GM12878 (cell line): ENCODE measurements at regions of chr11 and their contacts with region 1.

Region 1: DNA sequence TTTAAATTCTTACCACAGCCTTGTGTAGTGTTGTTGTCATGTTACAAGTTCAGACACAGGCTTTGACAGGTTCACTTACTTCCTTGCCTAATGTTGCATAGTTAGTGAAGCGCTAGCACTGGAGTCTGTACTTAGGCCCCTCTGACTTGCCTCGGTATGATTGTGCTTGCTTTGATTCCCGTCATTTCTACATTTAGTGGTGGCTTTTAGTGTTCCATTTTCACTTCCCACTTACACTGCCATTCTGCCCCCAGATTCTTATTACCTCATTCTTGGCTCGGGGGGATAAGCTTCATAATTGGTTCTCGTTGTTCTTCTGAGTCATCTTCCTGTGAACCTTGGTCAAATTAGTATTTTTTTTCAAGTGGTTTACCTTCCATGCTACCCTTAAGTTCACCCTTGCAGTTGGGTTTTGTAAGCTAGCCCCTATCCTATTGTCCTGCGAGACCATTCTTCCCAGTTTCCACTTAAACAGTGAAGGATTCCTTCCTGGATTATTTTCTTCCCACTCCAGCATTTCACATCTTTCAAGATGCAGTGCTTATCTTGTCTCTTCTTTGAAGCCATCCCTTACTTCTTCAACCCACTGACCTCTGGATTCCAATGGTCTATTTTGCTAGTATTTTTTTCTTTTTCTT is 68.7 kb downstream of the DDX10 start:
- DNase-seq: peak; percentile 93
- ATAC-seq: peak; percentile 96
- H3K4me3 ChIP-seq: no peak overlapping the region
- H3K27ac ChIP-seq: peak overlapping the region; percentile 79
- H3K4me1 ChIP-seq: peaks cover 22% of the 10 kb centered on the region
- H3K27me3 ChIP-seq: no peaks in the 10 kb centered on the region
- CTCF ChIP-seq: no peak
- EP300 ChIP-seq: peak; percentile 56 to 94; a peak in 3 of 4 replicates
- POLR2A ChIP-seq: peak; percentile 57
- RAD21 ChIP-seq: no peak

Region 2: DNA sequence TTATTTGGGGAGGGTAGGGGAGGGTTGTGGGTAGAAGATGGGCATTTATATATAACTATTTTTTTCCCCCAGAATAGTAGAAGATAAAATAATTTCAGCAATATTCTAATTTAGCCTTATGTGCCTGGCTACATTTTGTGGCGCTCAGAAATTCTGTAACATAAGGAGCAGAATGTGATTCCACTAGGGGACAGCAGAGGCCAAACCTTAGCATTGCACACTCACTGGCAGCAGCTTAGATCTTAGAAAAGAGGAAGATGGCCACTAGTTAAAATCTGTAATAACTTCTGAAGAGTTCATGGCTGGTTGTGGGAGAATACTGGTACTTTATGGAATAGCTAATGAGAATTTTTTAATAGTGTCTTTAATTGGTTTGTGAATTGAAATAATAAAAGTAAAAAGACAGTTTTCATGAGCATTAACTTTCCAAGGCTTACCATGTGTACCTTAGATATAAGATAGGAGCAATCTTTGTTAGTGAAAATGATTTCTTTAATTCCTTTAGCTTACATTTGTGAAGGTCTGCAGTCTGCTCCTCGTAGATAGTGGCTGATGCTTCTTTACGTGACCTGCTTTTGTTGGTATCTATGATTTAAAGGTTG is 35.6 kb before region 1 on chr11:
- CTCF ChIA-PET with region 1: interaction called, 173 read pairs
- POLR2A ChIA-PET with region 1: interaction called, 13 read pairs
- RAD21 ChIA-PET with region 1: interaction called, 161 read pairs
- SMC1A ChIA-PET with region 1: interaction called, 136 read pairs
- in situ Hi-C with region 1: no loop called
- intact Hi-C with region 1: loop called (anchors 1 kb)
- DNase-seq: peak; percentile 49
- ATAC-seq: peak; percentile 92
- H3K4me3 ChIP-seq: no peak overlapping the region
- H3K27ac ChIP-seq: no peak overlapping the region
- H3K4me1 ChIP-seq: 0 out of 2 replicates have a peak, but pooled peaks cover 3% of the 10 kb centered on the region
- H3K27me3 ChIP-seq: no peaks in the 10 kb centered on the region
- CTCF ChIP-seq: peak; percentile 89 to 98 (median 94)
- EP300 ChIP-seq: no peak
- POLR2A ChIP-seq: no peak
- RAD21 ChIP-seq: peak; percentile 100

Region 3: DNA sequence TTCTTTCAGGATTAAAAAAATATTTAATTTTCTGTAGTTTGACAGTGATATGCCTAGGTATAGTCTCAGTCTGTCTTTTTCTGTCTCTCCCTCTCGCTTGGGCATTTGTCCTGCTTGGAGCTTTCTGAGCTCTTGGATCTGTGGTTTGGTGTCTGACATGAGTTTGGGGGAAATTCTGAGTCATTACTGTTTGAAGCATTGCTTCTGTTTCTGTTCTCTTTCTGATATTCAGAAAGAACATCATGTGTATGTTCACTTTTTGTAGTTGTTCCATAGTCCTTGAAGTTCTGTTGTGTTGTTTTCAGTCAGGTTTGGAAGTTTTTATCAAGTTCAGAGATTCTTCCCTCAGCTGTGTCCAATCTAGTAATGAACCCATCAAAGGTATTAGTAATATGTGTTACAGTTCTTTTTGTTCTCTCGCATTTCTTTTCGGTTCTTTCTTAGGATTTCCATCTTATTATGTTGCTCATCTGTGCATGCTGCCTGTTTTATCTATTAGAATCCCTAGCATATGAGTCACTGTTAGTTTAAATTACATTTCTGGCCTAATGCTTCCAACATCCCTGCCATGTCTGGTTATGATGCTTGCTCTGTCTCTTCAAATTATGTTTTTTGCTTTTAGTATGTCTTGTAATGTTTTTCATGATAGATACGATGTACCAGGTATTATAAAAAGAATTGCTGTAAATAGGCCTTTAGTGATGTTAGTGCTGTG is 20.4 kb before region 1 on chr11:
- CTCF ChIA-PET with region 1: interaction called, 31 read pairs
- POLR2A ChIA-PET with region 1: interaction called, 3 read pairs
- RAD21 ChIA-PET with region 1: interaction called, 18 read pairs
- SMC1A ChIA-PET with region 1: interaction called, 51 read pairs
- in situ Hi-C with region 1: no loop called
- intact Hi-C with region 1: loop called (anchors 2 kb)
- DNase-seq: peak; percentile 54
- ATAC-seq: peak; percentile 80
- H3K4me3 ChIP-seq: peak overlapping the region; percentile 19; the same call in 1 of the 2 replicates
- H3K27ac ChIP-seq: peak overlapping the region; percentile 62
- H3K4me1 ChIP-seq: peaks cover 8% of the 10 kb centered on the region; the same call in 1 of the 2 replicates
- H3K27me3 ChIP-seq: no peaks in the 10 kb centered on the region
- CTCF ChIP-seq: no peak
- EP300 ChIP-seq: no peak; a peak in 1 of 4 replicates
- POLR2A ChIP-seq: no peak
- RAD21 ChIP-seq: 0 out of 2 replicates have a peak, but pooled peaks have one; percentile 2

Region 4: DNA sequence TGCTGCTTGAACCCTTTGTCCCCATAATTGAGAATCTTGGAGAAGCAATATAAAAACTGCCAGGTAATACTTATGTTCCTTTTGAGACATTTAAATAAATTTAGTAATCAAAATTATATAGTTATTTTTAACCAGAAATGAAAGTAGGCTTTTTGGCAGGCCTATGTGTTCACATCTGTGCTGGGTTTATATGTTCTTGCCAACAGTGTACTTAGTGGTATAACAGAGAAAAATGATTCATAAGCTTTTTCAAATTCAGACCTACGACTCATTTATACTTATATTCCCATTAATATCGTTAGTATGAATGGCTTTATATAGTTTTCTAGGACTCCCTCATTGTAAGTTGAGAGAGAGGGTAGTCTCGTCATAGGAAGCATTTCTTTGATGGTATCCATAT is 10.3 kb after region 1 on chr11:
- CTCF ChIA-PET with region 1: interaction called, 23 read pairs
- POLR2A ChIA-PET with region 1: interaction called, 3 read pairs
- RAD21 ChIA-PET with region 1: interaction called, 6 read pairs
- SMC1A ChIA-PET with region 1: interaction called, 16 read pairs
- in situ Hi-C with region 1: no loop called
- intact Hi-C with region 1: no loop called
- DNase-seq: no peak
- ATAC-seq: no peak
- H3K4me3 ChIP-seq: no peak overlapping the region
- H3K27ac ChIP-seq: no peak overlapping the region
- H3K4me1 ChIP-seq: no peaks in the 10 kb centered on the region
- H3K27me3 ChIP-seq: no peaks in the 10 kb centered on the region
- CTCF ChIP-seq: no peak
- EP300 ChIP-seq: no peak
- POLR2A ChIP-seq: no peak
- RAD21 ChIP-seq: no peak

Region 5: GRCh38 chr11:108754901-108755632 is 21.5 kb after region 1 on chr11:
- CTCF ChIA-PET with region 1: interaction called, 29 read pairs
- POLR2A ChIA-PET with region 1: interaction called, 3 read pairs
- RAD21 ChIA-PET with region 1: interaction called, 9 read pairs
- SMC1A ChIA-PET with region 1: interaction called, 16 read pairs
- in situ Hi-C with region 1: no loop called
- intact Hi-C with region 1: no loop called
- DNase-seq: no peak
- ATAC-seq: peak; percentile 19
- H3K4me3 ChIP-seq: no peak overlapping the region
- H3K27ac ChIP-seq: peak overlapping the region; percentile 18; the same call in 1 of the 2 replicates
- H3K4me1 ChIP-seq: peaks cover 6% of the 10 kb centered on the region
- H3K27me3 ChIP-seq: no peaks in the 10 kb centered on the region
- CTCF ChIP-seq: no peak
- EP300 ChIP-seq: no peak
- POLR2A ChIP-seq: no peak
- RAD21 ChIP-seq: no peak

Region 6: DNA sequence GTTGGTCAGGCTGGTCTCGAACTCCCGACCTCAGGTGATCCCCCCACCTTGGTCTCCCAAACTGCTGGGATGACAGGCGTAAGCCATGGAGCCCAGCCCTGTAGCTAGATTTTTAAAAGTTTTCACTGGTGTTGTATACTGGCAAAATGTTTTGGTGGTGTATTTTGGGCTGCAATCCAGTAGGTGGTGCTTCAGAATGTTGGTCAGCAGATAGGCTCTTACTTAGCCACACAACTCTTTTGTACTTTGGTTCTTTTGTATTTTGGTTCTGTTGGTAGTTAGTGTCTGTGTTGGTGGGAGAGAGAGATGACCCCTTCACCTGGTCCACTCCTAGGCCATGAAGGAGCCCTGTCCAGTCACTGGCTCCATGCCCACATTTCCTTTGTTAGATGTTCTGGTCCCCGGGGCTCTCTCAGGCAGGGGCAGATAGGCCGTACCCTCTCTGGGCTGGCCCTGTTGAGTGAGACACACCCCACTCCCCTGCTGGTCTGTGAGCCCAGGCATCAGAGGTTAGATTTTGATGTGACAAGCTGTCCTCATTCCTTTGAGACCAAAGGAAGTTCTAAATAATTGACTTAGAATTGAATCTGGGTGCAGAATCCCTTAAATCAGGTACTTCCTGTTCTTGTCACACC is 55.1 kb after region 1 on chr11:
- CTCF ChIA-PET with region 1: interaction called, 18 read pairs
- POLR2A ChIA-PET with region 1: no interaction called
- RAD21 ChIA-PET with region 1: interaction called, 3 read pairs
- SMC1A ChIA-PET with region 1: interaction called, 3 read pairs
- in situ Hi-C with region 1: no loop called
- intact Hi-C with region 1: no loop called
- DNase-seq: no peak
- ATAC-seq: peak; percentile 84
- H3K4me3 ChIP-seq: no peak overlapping the region
- H3K27ac ChIP-seq: no peak overlapping the region
- H3K4me1 ChIP-seq: peaks cover 4% of the 10 kb centered on the region; the same call in 1 of the 2 replicates
- H3K27me3 ChIP-seq: no peaks in the 10 kb centered on the region
- CTCF ChIP-seq: peak; percentile 50 to 55 (median 51); a peak in 5 of 6 replicates
- EP300 ChIP-seq: no peak
- POLR2A ChIP-seq: no peak
- RAD21 ChIP-seq: peak; percentile 69

Region 7: DNA sequence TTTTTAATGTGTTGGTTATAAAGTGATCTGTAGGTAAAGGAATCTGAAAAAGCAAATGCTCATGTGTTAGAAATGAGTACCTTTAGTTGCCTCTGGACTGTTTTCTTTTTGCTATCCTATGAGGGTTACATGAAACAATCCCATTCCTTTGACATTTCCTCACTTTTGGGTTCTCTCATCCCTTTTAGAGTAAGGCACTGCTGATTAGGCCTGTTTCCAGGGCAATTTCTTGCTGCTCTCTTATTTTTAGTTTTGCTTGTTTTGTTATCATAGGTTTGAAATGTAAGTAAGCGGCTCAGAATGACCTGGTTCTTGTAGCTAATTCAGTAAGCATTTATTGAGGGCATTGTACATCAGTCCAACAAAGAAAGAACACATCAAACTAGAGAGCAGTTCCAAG is 70.2 kb after region 1 on chr11:
- CTCF ChIA-PET with region 1: no interaction called
- POLR2A ChIA-PET with region 1: no interaction called
- RAD21 ChIA-PET with region 1: no interaction called
- SMC1A ChIA-PET with region 1: no interaction called
- in situ Hi-C with region 1: no loop called
- intact Hi-C with region 1: no loop called
- DNase-seq: no peak
- ATAC-seq: no peak
- H3K4me3 ChIP-seq: no peak overlapping the region
- H3K27ac ChIP-seq: no peak overlapping the region
- H3K4me1 ChIP-seq: no peaks in the 10 kb centered on the region
- H3K27me3 ChIP-seq: no peaks in the 10 kb centered on the region
- CTCF ChIP-seq: no peak
- EP300 ChIP-seq: no peak
- POLR2A ChIP-seq: no peak
- RAD21 ChIP-seq: no peak

Region 8: DNA sequence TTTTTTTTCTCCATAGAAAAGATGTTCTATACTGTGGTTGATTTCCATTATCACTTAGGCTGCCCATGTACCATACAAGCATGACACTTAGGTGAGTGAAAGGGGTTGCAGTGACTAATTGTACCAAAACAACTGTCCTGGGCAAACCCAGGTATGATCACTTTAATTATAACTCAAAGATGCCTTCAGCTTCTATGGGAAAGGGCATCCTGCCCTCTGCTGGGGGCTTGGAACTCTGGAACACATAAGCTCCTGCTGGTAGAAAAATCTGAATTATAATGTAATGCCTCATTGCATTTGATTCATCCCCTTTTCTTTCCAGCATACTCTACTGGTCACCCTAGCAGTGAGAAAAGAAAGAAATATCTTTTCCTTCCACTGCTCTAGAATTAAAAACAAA is 137.6 kb after region 1 on chr11:
- CTCF ChIA-PET with region 1: interaction called, 13 read pairs
- POLR2A ChIA-PET with region 1: interaction called, 3 read pairs
- RAD21 ChIA-PET with region 1: interaction called, 6 read pairs
- SMC1A ChIA-PET with region 1: interaction called, 5 read pairs
- in situ Hi-C with region 1: no loop called
- intact Hi-C with region 1: no loop called
- DNase-seq: no peak
- ATAC-seq: peak; percentile 58
- H3K4me3 ChIP-seq: no peak overlapping the region
- H3K27ac ChIP-seq: no peak overlapping the region
- H3K4me1 ChIP-seq: no peaks in the 10 kb centered on the region
- H3K27me3 ChIP-seq: no peaks in the 10 kb centered on the region
- CTCF ChIP-seq: peak; percentile 43 to 55 (median 48); a peak in 4 of 6 replicates
- EP300 ChIP-seq: no peak
- POLR2A ChIP-seq: no peak
- RAD21 ChIP-seq: peak; percentile 77

Region 9: GRCh38 chr11:109112821-109113280 is 379.3 kb after region 1 on chr11:
- CTCF ChIA-PET with region 1: no interaction called
- POLR2A ChIA-PET with region 1: no interaction called
- RAD21 ChIA-PET with region 1: no interaction called
- SMC1A ChIA-PET with region 1: no interaction called
- in situ Hi-C with region 1: no loop called
- intact Hi-C with region 1: no loop called
- DNase-seq: no peak
- ATAC-seq: no peak
- H3K4me3 ChIP-seq: no peak overlapping the region
- H3K27ac ChIP-seq: no peak overlapping the region
- H3K4me1 ChIP-seq: no peaks in the 10 kb centered on the region
- H3K27me3 ChIP-seq: no peaks in the 10 kb centered on the region; a peak in 2 of 4 replicates
- CTCF ChIP-seq: no peak
- EP300 ChIP-seq: no peak
- POLR2A ChIP-seq: no peak
- RAD21 ChIP-seq: no peak